Panc1 (cell line): ENCODE measurements at regions of chr1 and their contacts with region 1.

Region 1: DNA sequence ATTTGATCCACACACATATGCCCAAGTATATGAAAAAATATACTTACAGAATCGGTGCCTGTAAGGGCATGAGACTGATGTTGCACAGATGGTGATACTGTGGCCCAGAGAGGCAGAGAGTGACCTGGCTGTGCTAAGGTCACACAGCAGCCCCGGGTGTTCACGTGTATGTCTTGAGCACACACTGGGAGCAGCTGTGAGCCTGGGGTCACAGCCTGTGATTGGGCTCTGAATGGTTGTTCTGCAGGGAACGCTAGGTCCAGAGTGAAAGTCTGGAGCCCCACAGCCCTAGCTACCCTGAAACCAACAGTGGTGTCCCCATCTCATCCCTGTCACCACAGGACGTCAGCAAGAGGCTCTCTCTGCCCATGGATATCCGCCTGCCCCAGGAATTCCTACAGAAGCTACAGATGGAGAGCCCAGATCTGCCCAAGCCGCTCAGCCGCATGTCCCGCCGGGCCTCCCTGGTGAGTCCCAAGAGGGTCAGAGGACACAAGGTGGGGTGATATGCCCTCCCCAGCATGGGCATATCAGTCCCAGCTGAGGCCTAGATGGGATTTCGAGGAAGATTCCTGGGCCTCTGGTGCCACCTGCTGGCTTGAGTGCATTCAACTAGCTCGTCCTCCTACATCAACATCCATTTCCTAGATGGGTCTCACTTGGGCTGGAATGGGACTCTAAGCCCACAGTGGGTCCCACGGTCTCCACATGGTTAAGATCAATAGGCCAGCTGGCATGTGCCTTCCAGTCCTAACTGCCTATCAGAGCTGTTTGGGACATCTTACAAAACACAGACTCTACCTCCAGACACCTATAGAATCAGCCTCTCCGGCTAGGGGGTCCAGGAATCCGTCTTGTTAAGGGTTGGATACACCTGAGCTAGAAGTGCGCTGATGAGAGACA is 19.7 kb downstream of the CDK18 start:
- DNase-seq: peak; percentile 48
- ATAC-seq: peak; percentile 80
- H3K4me3 ChIP-seq: no peak overlapping the region
- H3K27ac ChIP-seq: no peak overlapping the region
- H3K4me1 ChIP-seq: peaks cover 13% of the 10 kb centered on the region
- H3K27me3 ChIP-seq: no peaks in the 10 kb centered on the region
- CTCF ChIP-seq: peak; percentile 86

Region 2: GRCh38 chr1:205335643-205336091 is 188.5 kb before region 1 on chr1:
- CTCF ChIA-PET with region 1: interaction called, 21 read pairs
- POLR2A ChIA-PET with region 1: no interaction called
- in situ Hi-C with region 1: no loop called
- intact Hi-C with region 1: no loop called
- DNase-seq: no peak
- ATAC-seq: peak; percentile 94
- H3K4me3 ChIP-seq: no peak overlapping the region
- H3K27ac ChIP-seq: no peak overlapping the region
- H3K4me1 ChIP-seq: 0 out of 2 replicates have a peak, but pooled peaks cover 3% of the 10 kb centered on the region
- H3K27me3 ChIP-seq: no peaks in the 10 kb centered on the region
- CTCF ChIP-seq: peak; percentile 99

Region 3: GRCh38 chr1:205354259-205354904 is 169.8 kb before region 1 on chr1:
- CTCF ChIA-PET with region 1: interaction called, 37 read pairs
- POLR2A ChIA-PET with region 1: no interaction called
- in situ Hi-C with region 1: no loop called
- intact Hi-C with region 1: loop called (anchors 1 kb)
- DNase-seq: peak; percentile 43
- ATAC-seq: peak; percentile 82
- H3K4me3 ChIP-seq: no peak overlapping the region
- H3K27ac ChIP-seq: no peak overlapping the region
- H3K4me1 ChIP-seq: no peaks in the 10 kb centered on the region
- H3K27me3 ChIP-seq: no peaks in the 10 kb centered on the region
- CTCF ChIP-seq: peak; percentile 89

Region 4: GRCh38 chr1:205396967-205397616 is 127.0 kb before region 1 on chr1:
- CTCF ChIA-PET with region 1: interaction called, 5 read pairs
- POLR2A ChIA-PET with region 1: no interaction called
- in situ Hi-C with region 1: no loop called
- intact Hi-C with region 1: loop called (anchors 2 kb)
- DNase-seq: peak; percentile 32
- ATAC-seq: peak; percentile 80
- H3K4me3 ChIP-seq: no peak overlapping the region
- H3K27ac ChIP-seq: no peak overlapping the region
- H3K4me1 ChIP-seq: no peaks in the 10 kb centered on the region
- H3K27me3 ChIP-seq: 0 out of 2 replicates have a peak, but pooled peaks cover 3% of the 10 kb centered on the region
- CTCF ChIP-seq: peak; percentile 81

Region 5: GRCh38 chr1:205485338-205486228 is 38.6 kb before region 1 on chr1:
- CTCF ChIA-PET with region 1: interaction called, 92 read pairs
- POLR2A ChIA-PET with region 1: interaction called, 9 read pairs
- in situ Hi-C with region 1: no loop called
- intact Hi-C with region 1: loop called (anchors 1 kb)
- DNase-seq: no peak
- ATAC-seq: peak; percentile 84
- H3K4me3 ChIP-seq: no peak overlapping the region
- H3K27ac ChIP-seq: no peak overlapping the region
- H3K4me1 ChIP-seq: peaks cover 10% of the 10 kb centered on the region
- H3K27me3 ChIP-seq: no peaks in the 10 kb centered on the region
- CTCF ChIP-seq: peak; percentile 98